Caco-2 (cell line): ENCODE measurements at regions of chr20 and their contacts with region 1.

Region 1: GRCh38 chr20:44966030-44966961 is at the start of gene STK4:
- DNase-seq: peak; percentile 99 to 100
- H3K4me3 ChIP-seq: peak within 1 kb of the TSS; percentile 64
- H3K4me3 Mint-ChIP-seq: peak within 1 kb of the TSS; percentile 99
- H3K27ac Mint-ChIP-seq: peak within 1 kb of the TSS; percentile 94
- H3K4me1 ChIP-seq: peaks cover 39% of the 10 kb centered on the region
- H3K4me1 Mint-ChIP-seq: peaks cover 39% of the 10 kb centered on the region
- H3K27me3 ChIP-seq: no peaks in the 10 kb centered on the region
- H3K27me3 Mint-ChIP-seq: no peaks in the 10 kb centered on the region
- CTCF ChIP-seq: peak; percentile 40 to 90
- total RNA-seq, gene STK4: 68.3 and 74.7 TPM in 2 replicates

Region 2: GRCh38 chr20:45020236-45020886 is 54.1 kb after region 1 on chr20:
- CTCF ChIA-PET with region 1: no interaction called
- POLR2A ChIA-PET with region 1: no interaction called
- intact Hi-C with region 1: loop called (anchors 2 kb)
- DNase-seq: peak; percentile 46 to 68
- H3K4me3 ChIP-seq: no peak overlapping the region
- H3K4me3 Mint-ChIP-seq: no peak overlapping the region
- H3K27ac Mint-ChIP-seq: no peak overlapping the region
- H3K4me1 ChIP-seq: peaks cover 35% of the 10 kb centered on the region
- H3K4me1 Mint-ChIP-seq: peaks cover 36% of the 10 kb centered on the region
- H3K27me3 ChIP-seq: no peaks in the 10 kb centered on the region
- H3K27me3 Mint-ChIP-seq: no peaks in the 10 kb centered on the region
- CTCF ChIP-seq: no peak